ENCODE measurements at regions of chr5 and their contacts with region 1.

Region 1: DNA sequence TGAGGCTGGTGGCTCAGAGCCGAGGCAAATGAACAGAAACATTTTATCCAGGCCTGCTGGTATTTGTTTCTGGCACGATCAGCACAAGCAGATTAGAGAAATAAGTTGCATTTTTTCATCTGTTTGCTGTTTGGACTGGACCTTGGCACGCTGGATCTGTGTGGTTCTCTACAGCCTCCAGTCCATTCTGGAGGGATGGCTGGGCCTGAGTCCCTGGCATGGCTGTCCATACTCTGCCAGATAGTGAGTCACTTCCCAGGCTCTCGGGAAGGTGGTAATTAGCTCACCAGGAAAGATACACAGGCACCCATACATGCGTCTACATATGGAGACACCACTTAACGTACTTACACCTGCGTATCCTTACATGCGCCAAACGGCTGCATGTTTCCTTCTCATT is 78.6 kb downstream of the SPRY4 start:
- DNase-seq: peak; percentile 23
- H3K4me3 ChIP-seq: no peak overlapping the region
- H3K27ac ChIP-seq: peak overlapping the region; percentile 66
- H3K4me1 ChIP-seq: peaks cover 13% of the 10 kb centered on the region
- H3K27me3 ChIP-seq: no peaks in the 10 kb centered on the region
- CTCF ChIP-seq: no peak
- POLR2A ChIP-seq: no peak

Region 2: DNA sequence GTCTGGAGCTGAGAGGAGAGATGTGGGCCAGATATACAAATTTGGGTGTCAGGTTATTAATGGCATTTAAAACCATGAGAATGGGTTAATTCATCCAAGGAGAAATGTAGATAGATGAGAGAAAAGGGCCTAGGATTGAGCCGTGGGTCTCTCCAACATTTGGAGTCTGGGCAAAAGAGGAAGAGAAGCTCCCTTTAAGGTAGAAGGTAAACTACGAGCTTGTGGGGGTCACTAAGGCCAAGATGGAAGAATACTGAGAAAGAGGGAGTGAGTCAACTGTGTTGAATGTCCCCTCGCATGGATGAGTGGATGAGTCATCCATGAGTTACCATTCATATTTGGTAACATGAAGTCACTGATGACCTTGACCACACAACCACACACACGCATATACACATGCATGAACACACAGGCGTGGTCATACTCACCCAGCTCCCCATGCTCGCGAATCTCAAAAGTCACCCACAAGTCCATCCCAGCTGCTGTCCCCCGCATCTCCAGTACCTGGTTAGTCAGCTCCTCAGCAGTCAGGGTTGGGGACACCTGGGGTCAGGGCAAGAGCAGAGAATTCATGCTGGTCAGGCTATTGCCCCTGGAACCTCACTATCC is 588.2 kb before region 1 on chr5:
- CTCF ChIA-PET with region 1: no interaction called
- POLR2A ChIA-PET with region 1: no interaction called
- dilution Hi-C with region 1: no loop called
- intact Hi-C with region 1: no loop called
- DNase-seq: peak; percentile 77
- H3K4me3 ChIP-seq: no peak overlapping the region
- H3K27ac ChIP-seq: peak overlapping the region; percentile 54
- H3K4me1 ChIP-seq: peaks cover 10% of the 10 kb centered on the region
- H3K27me3 ChIP-seq: no peaks in the 10 kb centered on the region
- CTCF ChIP-seq: no peak
- POLR2A ChIP-seq: peak; percentile 34

Region 3: DNA sequence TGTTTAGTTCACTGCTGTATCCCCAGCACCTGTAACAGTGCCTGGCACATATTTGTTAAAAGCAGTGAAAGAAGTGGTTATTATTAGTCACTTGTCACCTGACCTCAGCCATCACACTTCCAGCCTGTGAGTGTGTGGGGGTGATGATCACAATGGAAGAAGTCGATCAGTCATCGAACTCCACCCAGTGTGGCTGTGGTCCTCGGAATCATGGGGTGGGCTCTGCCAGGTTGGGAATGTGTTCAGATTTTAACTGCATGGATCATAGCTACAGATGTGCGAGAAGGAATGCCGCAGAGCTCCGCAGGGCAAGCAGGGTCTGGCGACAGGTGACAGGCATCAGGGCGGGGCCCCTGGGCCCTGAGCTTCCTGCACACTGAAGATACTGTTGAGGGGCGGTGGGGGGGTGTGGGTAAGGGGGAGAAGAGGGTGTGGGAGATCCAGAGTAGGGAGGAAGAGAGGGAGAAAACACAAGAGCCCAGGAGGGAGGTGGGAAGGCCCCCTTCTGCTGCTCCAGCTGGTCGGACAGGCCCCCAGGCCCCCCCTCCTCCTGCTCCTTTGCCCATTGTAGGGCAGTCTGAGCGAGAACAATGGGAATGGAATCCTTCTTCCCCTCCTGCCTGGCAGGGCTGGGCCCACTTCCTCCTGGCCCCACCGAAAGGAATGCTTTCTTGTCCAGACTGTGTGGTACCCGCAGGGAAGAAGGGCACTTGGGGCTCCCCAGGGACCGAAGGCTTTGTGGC is 11.0 kb before region 1 on chr5:
- CTCF ChIA-PET with region 1: interaction called, 4 read pairs
- POLR2A ChIA-PET with region 1: no interaction called
- dilution Hi-C with region 1: no loop called
- intact Hi-C with region 1: loop called (anchors 2 kb)
- DNase-seq: peak; percentile 65
- H3K4me3 ChIP-seq: no peak overlapping the region
- H3K27ac ChIP-seq: peak overlapping the region; percentile 19
- H3K4me1 ChIP-seq: peaks cover 15% of the 10 kb centered on the region
- H3K27me3 ChIP-seq: no peaks in the 10 kb centered on the region
- CTCF ChIP-seq: no peak
- POLR2A ChIP-seq: no peak

Measured in endothelial cell of umbilical vein (primary cell).